HEK293 (cell line): ENCODE measurements at regions of chr16 and their contacts with region 1.

Region 1: DNA sequence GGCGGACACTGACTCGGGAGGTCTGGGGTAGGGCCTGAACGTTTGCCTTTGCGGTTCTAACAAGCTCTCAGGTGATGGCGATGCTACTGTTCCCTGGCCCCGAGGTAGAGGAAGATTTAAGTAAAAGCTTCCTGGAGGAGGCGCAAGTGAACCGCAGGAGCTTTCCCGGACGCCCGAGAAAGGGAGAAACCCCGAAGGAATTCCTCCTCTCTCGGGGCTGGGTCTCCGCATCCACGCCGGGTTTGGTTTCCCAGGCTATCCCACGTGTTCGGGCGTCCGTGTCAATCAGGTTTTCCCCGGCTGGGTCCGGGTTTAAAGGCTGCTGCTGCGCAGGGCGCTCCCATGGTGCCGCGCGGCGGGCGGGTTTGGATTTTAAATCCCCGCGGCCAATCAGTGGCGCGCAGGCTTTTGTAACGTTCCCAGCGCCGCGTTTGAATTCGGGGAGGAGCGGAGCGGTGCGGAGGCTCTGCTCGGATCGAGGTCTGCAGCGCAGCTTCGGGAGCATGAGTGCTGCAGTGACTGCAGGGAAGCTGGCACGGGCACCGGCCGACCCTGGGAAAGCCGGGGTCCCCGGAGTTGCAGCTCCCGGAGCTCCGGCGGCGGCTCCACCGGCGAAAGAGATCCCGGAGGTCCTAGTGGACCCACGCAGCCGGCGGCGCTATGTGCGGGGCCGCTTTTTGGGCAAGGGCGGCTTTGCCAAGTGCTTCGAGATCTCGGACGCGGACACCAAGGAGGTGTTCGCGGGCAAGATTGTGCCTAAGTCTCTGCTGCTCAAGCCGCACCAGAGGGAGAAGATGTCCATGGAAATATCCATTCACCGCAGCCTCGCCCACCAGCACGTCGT is at the start of gene PLK1:
- H3K4me3 ChIP-seq: peak within 1 kb of the TSS; percentile 87
- H3K27ac ChIP-seq: peak within 1 kb of the TSS; percentile 51; the same call in 1 of the 2 replicates
- H3K4me1 ChIP-seq: peaks cover 9% of the 10 kb centered on the region
- CTCF ChIP-seq: peak; percentile 15; the same call in 1 of the 2 replicates

Region 2: DNA sequence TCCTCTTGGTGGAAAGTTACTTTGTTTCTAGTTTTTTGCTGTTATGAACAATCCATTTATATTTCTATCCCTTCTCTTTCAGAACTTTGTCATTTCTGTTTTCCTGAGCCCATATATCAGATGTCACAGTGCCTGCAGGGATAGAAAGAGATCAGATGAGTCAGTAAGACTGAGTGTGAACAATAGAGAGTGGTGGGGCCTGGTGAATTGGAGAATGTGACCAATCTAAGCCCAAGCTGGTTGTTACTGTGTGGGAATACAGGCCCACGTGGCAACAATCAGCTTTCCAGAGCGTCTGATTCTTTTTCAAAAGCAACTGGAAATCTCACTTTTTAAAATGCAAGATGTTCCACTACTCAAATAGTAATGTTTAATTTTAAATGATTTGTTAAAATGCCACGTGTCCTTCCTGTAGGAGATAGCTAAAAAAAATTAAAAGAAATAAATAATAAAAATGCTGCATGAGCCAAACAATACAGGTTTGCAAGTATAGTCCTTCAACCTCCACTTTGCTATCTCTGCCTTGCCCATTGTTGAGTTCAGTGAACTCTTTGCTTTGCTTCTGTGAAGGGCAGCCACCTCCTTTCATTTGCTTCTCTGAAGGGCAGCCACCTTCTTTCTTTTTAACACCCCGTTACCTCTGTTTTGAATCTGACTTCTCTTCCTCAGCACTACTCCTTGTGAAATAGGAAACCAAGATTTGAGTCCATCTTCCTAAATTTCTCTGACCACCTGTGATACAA is 27.8 kb before region 1 on chr16:
- CTCF ChIA-PET with region 1: no interaction called
- POLR2A ChIA-PET with region 1: no interaction called
- H3K4me3 ChIP-seq: no peak overlapping the region
- H3K27ac ChIP-seq: no peak overlapping the region
- H3K4me1 ChIP-seq: no peaks in the 10 kb centered on the region
- CTCF ChIP-seq: no peak

Region 3: DNA sequence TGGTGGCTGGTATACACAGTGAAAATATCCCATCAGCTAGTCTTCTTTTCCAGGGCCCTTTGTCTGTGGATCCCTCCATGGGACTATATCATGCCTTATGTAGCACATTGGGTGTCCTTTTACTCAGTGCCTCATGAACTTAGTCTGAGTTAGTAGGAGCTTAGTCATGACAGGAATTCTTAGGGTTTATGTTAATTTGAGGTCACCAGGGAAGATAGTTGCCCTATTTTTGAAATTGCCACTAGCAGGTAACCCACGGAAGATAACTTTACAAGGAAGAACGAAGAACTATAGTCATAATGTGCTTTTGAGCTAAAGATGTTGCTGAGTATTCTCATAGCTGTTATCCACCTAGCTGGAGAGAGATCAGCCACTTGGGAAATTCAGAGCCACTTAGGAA is 14.7 kb before region 1 on chr16:
- CTCF ChIA-PET with region 1: interaction called, 14 read pairs
- POLR2A ChIA-PET with region 1: interaction called, 3 read pairs
- H3K4me3 ChIP-seq: no peak overlapping the region
- H3K27ac ChIP-seq: no peak overlapping the region
- H3K4me1 ChIP-seq: no peaks in the 10 kb centered on the region
- CTCF ChIP-seq: no peak

Region 4: GRCh38 chr16:23691482-23692189 is 13.0 kb after region 1 on chr16:
- CTCF ChIA-PET with region 1: interaction called, 3 read pairs
- POLR2A ChIA-PET with region 1: interaction called, 33 read pairs
- H3K4me3 ChIP-seq: no peak overlapping the region
- H3K27ac ChIP-seq: no peak overlapping the region
- H3K4me1 ChIP-seq: no peaks in the 10 kb centered on the region
- CTCF ChIP-seq: no peak

Region 5: GRCh38 chr16:23770744-23771426 is 92.2 kb after region 1 on chr16:
- CTCF ChIA-PET with region 1: no interaction called
- POLR2A ChIA-PET with region 1: no interaction called
- H3K4me3 ChIP-seq: no peak overlapping the region
- H3K27ac ChIP-seq: no peak overlapping the region
- H3K4me1 ChIP-seq: no peaks in the 10 kb centered on the region
- CTCF ChIP-seq: no peak